CD8-positive, alpha-beta T cell (primary cell): ENCODE measurements at regions of chr19 and their contacts with region 1.

Region 1: DNA sequence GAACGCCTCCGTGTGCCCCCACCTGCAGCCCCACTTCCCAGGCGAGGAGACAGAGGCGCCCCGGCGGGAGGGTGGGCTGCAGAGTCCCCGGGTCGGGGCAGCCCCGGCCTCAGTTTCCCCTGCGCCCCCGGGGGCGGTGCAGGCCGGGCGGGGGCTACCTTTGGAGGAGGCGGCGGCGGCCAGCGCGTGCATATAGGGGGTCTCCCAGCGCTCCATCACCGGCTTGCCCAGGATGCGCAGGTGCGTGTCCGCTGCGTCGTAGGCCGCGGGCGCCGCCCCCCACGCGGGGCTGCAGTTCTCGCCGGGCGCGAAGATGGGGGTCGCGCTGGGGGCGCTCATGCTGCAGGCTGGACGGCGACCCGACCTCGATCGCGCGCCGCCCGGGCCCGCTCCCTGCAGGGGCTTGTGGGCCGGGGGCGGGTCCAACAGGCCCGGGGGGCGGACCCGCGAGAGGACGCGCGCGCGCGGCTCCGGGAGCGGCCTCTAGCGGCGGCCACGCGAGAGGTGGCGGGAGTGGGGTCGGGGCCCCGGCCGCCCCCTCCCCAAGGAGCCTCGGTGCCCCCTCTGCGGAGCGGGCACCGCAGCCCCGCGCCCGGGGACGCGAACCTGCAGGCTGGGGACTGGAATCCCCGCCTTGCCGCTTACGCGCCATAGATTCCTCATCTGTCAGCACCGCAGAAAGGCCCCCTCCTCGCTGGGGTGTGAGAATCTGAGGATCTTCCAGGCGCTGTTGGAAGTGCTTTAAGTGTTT is at the start of gene GAMT:
- DNase-seq: peak; percentile 23 to 80 (median 58)
- ATAC-seq: peak; percentile 85
- H3K4me3 ChIP-seq: peak within 1 kb of the TSS; percentile 38 to 57
- H3K4me3 Mint-ChIP-seq: peak within 1 kb of the TSS; percentile 76
- H3K27ac ChIP-seq: no peak within 1 kb of the TSS
- H3K27ac Mint-ChIP-seq: no peak within 1 kb of the TSS
- H3K4me1 ChIP-seq: peaks cover 22% of the 10 kb centered on the region
- H3K4me1 Mint-ChIP-seq: peaks cover 9% of the 10 kb centered on the region
- H3K27me3 ChIP-seq: no peaks in the 10 kb centered on the region
- H3K27me3 Mint-ChIP-seq: no peaks in the 10 kb centered on the region
- CTCF ChIP-seq: peak; percentile 62
- total RNA-seq, gene GAMT: 9.5 to 11.4 TPM

Region 2: GRCh38 chr19:1355568-1356507 is 45.5 kb before region 1 on chr19:
- CTCF ChIA-PET with region 1: no interaction called
- POLR2A ChIA-PET with region 1: no interaction called
- intact Hi-C with region 1: loop called in 1 of 2 experiments (anchors 2 kb)
- DNase-seq: peak in 1 of 9 experiments; percentile 33
- ATAC-seq: no peak
- H3K4me3 ChIP-seq: peak overlapping the region; percentile 71 to 74
- H3K4me3 Mint-ChIP-seq: peak overlapping the region; percentile 85
- H3K27ac ChIP-seq: no peak overlapping the region
- H3K27ac Mint-ChIP-seq: peak overlapping the region; percentile 4
- H3K4me1 ChIP-seq: peaks cover 10% of the 10 kb centered on the region
- H3K4me1 Mint-ChIP-seq: peaks cover 12% of the 10 kb centered on the region
- H3K27me3 ChIP-seq: no peaks in the 10 kb centered on the region
- H3K27me3 Mint-ChIP-seq: no peaks in the 10 kb centered on the region
- CTCF ChIP-seq: no peak

Region 3: DNA sequence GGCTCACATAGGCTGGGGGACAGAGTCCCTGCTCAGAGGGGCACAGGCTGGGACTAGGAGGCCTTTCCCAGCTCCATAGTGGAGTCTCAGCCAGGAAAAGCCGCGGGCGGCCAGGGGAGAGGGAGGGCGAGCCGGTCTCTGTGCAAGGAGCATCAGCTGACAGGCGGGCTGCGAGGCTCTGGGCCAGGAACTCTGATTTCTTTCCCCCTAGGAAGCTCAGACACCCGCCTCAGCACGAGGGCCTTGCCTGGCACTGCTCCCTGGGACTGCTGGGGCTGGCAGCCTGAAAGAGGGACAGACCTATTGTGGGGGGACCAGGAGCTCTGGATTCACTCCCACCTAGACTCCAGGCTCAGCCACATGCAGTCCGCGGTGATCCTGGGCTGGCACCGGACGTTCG is 120.3 kb after region 1 on chr19:
- CTCF ChIA-PET with region 1: no interaction called
- POLR2A ChIA-PET with region 1: no interaction called
- intact Hi-C with region 1: no loop called
- DNase-seq: no peak
- ATAC-seq: no peak
- H3K4me3 ChIP-seq: no peak overlapping the region
- H3K4me3 Mint-ChIP-seq: no peak overlapping the region
- H3K27ac ChIP-seq: no peak overlapping the region
- H3K27ac Mint-ChIP-seq: no peak overlapping the region
- H3K4me1 ChIP-seq: no peaks in the 10 kb centered on the region
- H3K4me1 Mint-ChIP-seq: peaks cover 7% of the 10 kb centered on the region
- H3K27me3 ChIP-seq: peaks cover 12 to 14% of the 10 kb centered on the region in 2 experiments
- H3K27me3 Mint-ChIP-seq: peaks cover 29% of the 10 kb centered on the region
- CTCF ChIP-seq: no peak